Left ventricle myocardium inferior (tissue), 1 donor: ENCODE measurements at regions of chr3 and their contacts with region 1.

Region 1: DNA sequence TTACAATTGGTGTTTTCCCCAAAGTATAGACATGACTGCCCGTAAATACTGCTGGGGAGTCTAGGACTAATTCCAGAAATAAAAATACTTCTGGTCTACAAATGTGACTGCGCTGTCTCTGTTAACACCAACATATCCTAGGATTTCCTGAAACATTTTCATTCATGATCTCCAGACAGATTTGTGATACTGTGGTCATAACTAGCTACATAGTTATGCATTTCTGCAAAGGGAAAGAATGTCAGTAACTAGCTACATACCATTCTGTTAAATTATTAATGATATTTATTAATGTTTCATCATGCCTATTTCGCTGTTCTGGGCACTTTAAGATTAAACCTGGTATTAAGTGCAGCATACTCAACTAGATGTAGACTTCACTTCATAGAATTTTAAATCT is 33.3 kb downstream of the SETD5 start:
- DNase-seq: no peak
- H3K4me3 ChIP-seq: no peak overlapping the region
- H3K27ac ChIP-seq: no peak overlapping the region
- H3K4me1 ChIP-seq: peaks cover 32% of the 10 kb centered on the region
- H3K27me3 ChIP-seq: no peaks in the 10 kb centered on the region
- CTCF ChIP-seq: no peak

Region 2: GRCh38 chr3:9390265-9390888 is 40.4 kb before region 1 on chr3:
- intact Hi-C with region 1: loop called (anchors 5 kb)
- DNase-seq: no peak
- H3K4me3 ChIP-seq: no peak overlapping the region
- H3K27ac ChIP-seq: no peak overlapping the region
- H3K4me1 ChIP-seq: peaks cover 57% of the 10 kb centered on the region
- H3K27me3 ChIP-seq: no peaks in the 10 kb centered on the region
- CTCF ChIP-seq: no peak

Region 3: GRCh38 chr3:9876991-9877390 is 446.3 kb after region 1 on chr3:
- intact Hi-C with region 1: no loop called
- DNase-seq: no peak
- H3K4me3 ChIP-seq: no peak overlapping the region
- H3K27ac ChIP-seq: no peak overlapping the region
- H3K4me1 ChIP-seq: no peaks in the 10 kb centered on the region
- H3K27me3 ChIP-seq: no peaks in the 10 kb centered on the region
- CTCF ChIP-seq: no peak